ENCODE measurements at regions of chr5 and their contacts with region 1.

Region 1: GRCh38 chr5:116068028-116068632 is 16.7 kb upstream of the COMMD10 start:
- DNase-seq: peak; percentile 53
- H3K4me3 ChIP-seq: no peak overlapping the region
- H3K27ac ChIP-seq: no peak overlapping the region
- H3K27me3 ChIP-seq: no peaks in the 10 kb centered on the region
- CTCF ChIP-seq: peak; percentile 52

Region 2: GRCh38 chr5:115888027-115888426 is 180.1 kb before region 1 on chr5:
- in situ Hi-C with region 1: loop called (anchors 25 kb)
- DNase-seq: no peak
- H3K4me3 ChIP-seq: no peak overlapping the region
- H3K27ac ChIP-seq: no peak overlapping the region
- H3K27me3 ChIP-seq: no peaks in the 10 kb centered on the region
- CTCF ChIP-seq: no peak

Measured in brain microvascular endothelial cell (primary cell).